IMR-90 (cell line): ENCODE measurements at regions of chr10 and their contacts with region 1.

Region 1: GRCh38 chr10:784403-785088 is 95.1 kb upstream of the DIP2C start:
- DNase-seq: peak; percentile 88
- ATAC-seq: peak; percentile 87
- H3K4me3 ChIP-seq: peak overlapping the region; percentile 51
- H3K27ac ChIP-seq: peak overlapping the region; percentile 34; the same call in 1 of the 2 replicates
- H3K4me1 ChIP-seq: peaks cover 5% of the 10 kb centered on the region
- H3K27me3 ChIP-seq: no peaks in the 10 kb centered on the region
- CTCF ChIP-seq: peak; percentile 43
- POLR2A ChIP-seq: 0 out of 2 replicates have a peak, but pooled peaks have one; percentile 39
- RAD21 ChIP-seq: peak; percentile 57

Region 2: DNA sequence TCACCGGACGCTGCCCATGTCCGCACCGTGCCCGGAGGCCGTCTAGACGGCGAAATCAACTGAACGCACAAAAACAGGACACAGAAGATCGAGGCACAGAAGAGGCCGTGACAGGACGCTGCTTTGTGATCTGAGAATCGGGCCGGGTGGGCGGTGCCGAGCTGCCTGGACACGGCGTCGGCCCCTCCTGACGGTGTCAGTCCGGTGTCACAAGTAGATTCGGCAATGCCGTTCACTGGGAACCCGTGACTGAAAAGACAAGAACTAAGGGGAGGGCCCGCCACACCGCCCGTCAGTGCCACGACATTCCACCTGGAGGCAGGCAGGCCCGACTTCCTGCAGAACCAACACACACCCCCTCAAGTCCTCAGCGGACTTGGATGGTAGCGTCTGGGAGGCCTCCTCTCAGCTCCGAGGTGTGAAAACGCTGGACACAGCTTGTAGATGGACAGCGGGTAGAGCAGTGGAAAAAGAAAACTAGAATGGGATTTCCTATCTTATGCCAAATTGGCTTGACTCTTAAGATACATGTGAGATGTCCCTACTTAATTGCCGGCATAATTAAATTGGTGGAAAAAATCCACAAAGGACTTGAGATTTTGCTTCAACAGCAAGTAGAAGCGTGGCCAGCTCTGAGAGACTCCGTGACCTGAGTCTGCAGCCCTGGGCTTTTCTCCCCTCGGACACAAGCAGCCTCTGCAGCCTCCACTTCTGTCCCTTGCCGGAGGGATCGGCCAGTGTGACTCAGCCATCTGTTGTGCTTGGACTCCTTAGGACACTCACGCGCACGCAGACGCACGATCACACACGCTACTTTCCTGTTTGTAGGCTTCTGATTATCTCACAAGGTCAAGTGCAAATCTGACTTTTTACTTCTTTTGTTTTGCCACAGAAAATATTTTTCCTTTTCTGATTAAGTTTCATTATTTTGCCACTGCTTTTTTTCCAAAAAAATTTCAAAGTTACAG is 364.1 kb before region 1 on chr10:
- CTCF ChIA-PET with region 1: no interaction called
- POLR2A ChIA-PET with region 1: no interaction called
- dilution Hi-C with region 1: no loop called
- in situ Hi-C with region 1: no loop called
- intact Hi-C with region 1: no loop called
- DNase-seq: no peak
- ATAC-seq: no peak
- H3K4me3 ChIP-seq: no peak overlapping the region
- H3K27ac ChIP-seq: no peak overlapping the region
- H3K4me1 ChIP-seq: no peaks in the 10 kb centered on the region
- H3K27me3 ChIP-seq: no peaks in the 10 kb centered on the region
- CTCF ChIP-seq: no peak
- POLR2A ChIP-seq: no peak
- RAD21 ChIP-seq: no peak

Region 3: GRCh38 chr10:689433-690371 is 94.8 kb before region 1 on chr10 and contains the start of gene DIP2C:
- CTCF ChIA-PET with region 1: no interaction called
- POLR2A ChIA-PET with region 1: no interaction called
- dilution Hi-C with region 1: no loop called
- in situ Hi-C with region 1: no loop called
- intact Hi-C with region 1: loop called (anchors 5 kb)
- DNase-seq: peak; percentile 77
- ATAC-seq: peak; percentile 92
- H3K4me3 ChIP-seq: peak within 1 kb of the TSS; percentile 95
- H3K27ac ChIP-seq: peak within 1 kb of the TSS; percentile 93
- H3K4me1 ChIP-seq: peaks cover 23% of the 10 kb centered on the region
- H3K27me3 ChIP-seq: no peaks in the 10 kb centered on the region
- CTCF ChIP-seq: no peak
- POLR2A ChIP-seq: peak; percentile 55; the same call in 1 of the 2 replicates
- RAD21 ChIP-seq: no peak
- total RNA-seq, gene DIP2C: 8.6 and 9.2 TPM in 2 replicates

Region 4: DNA sequence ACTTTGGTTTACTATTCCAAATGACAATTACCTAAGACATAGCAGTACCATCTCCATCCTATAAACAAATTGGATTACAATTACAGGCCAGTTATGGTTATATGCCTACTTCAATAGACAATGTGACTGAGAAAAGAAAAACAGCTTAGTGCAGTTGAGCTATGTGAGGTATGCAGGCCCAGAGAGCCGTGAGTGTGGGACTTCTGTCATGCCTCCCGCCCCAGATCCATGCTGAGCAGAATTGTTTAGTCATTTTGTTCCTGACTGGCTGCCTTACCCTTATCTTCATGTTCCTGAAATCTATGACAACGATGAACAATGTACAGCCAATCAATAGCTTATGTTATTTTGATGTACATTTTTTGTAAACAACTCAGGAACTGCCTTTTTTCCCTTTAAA is 125.3 kb after region 1 on chr10:
- CTCF ChIA-PET with region 1: no interaction called
- POLR2A ChIA-PET with region 1: no interaction called
- dilution Hi-C with region 1: no loop called
- in situ Hi-C with region 1: no loop called
- intact Hi-C with region 1: no loop called
- DNase-seq: peak; percentile 60
- ATAC-seq: peak; percentile 94
- H3K4me3 ChIP-seq: no peak overlapping the region
- H3K27ac ChIP-seq: no peak overlapping the region
- H3K4me1 ChIP-seq: peaks cover 12% of the 10 kb centered on the region
- H3K27me3 ChIP-seq: no peaks in the 10 kb centered on the region
- CTCF ChIP-seq: no peak
- POLR2A ChIP-seq: no peak
- RAD21 ChIP-seq: no peak